H1 (cell line): ENCODE measurements at regions of chr15 and their contacts with region 1.

Region 1: GRCh38 chr15:75215107-75216004 is 13.7 kb downstream of the C15orf39 start:
- DNase-seq: peak in 1 of 2 experiments; percentile 58
- H3K4me3 ChIP-seq: no peak overlapping the region
- H3K27ac ChIP-seq: no peak overlapping the region
- H3K4me1 ChIP-seq: peaks cover 0 to 17% (median 3%) of the 10 kb centered on the region in 4 experiments; a peak in 4 of 7 replicates
- H3K27me3 ChIP-seq: peaks cover 0 to 3% (median 0%) of the 10 kb centered on the region in 4 experiments; a peak in 1 of 7 replicates
- CTCF ChIP-seq: no peak
- EP300 ChIP-seq: no peak
- POLR2A ChIP-seq: no peak
- RAD21 ChIP-seq: no peak

Region 2: DNA sequence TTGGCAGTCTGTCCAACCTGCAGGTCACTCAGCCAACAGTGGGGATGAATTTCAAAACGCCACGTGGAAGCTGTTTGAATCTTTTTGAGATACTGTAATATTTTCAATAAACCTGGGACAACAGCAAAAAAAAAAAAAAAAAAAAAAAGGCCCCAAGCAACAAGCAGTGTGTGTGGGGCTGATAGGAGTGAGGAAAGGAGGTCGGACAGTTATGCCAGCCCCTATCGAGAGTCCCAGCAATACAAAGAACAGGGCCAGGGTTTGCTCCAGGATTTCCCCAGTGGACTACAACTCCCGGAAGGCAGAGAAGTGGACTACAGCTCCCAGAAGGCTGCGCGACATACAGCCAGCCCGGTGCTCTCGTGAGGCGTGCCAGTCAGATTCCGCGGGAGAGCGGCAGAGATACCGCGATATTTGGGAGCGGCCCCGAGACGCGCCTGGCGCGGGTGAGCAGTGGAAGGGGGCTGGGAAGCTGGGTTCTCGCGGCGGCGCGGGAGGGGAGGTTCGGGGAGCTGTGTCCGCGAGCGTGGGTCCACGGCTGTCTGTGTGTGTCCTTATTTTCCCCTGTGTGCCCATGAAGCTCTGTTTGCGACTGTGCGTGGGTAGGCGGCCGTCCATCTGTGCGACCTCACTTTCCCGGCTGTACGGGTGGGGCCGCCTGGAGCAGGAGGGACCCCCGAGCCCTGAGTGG is 192.0 kb before region 1 on chr15 and contains the start of gene PPCDC:
- CTCF ChIA-PET with region 1: no interaction called
- POLR2A ChIA-PET with region 1: interaction called, 10 read pairs
- DNase-seq: peak; percentile 77 to 95
- H3K4me3 ChIP-seq: peak within 1 kb of the TSS; percentile 87 to 99 (median 90)
- H3K27ac ChIP-seq: peak within 1 kb of the TSS; percentile 90
- H3K4me1 ChIP-seq: no peaks in the 10 kb centered on the region; a peak in 1 of 7 replicates
- H3K27me3 ChIP-seq: no peaks in the 10 kb centered on the region
- CTCF ChIP-seq: no peak
- EP300 ChIP-seq: no peak
- POLR2A ChIP-seq: peak; percentile 95 to 99
- RAD21 ChIP-seq: peak in 1 of 2 experiments; percentile 7; a peak in 1 of 4 replicates
- total RNA-seq, gene PPCDC: 11.3 and 14.7 TPM in 2 replicates

Region 3: GRCh38 chr15:75307778-75308391 is 92.5 kb after region 1 on chr15:
- CTCF ChIA-PET with region 1: interaction called, 20 read pairs
- POLR2A ChIA-PET with region 1: interaction called, 3 read pairs
- DNase-seq: peak; percentile 60 to 88
- H3K4me3 ChIP-seq: no peak overlapping the region
- H3K27ac ChIP-seq: no peak overlapping the region
- H3K4me1 ChIP-seq: no peaks in the 10 kb centered on the region
- H3K27me3 ChIP-seq: no peaks in the 10 kb centered on the region
- CTCF ChIP-seq: peak; percentile 94 to 95 (median 95)
- EP300 ChIP-seq: no peak
- POLR2A ChIP-seq: no peak
- RAD21 ChIP-seq: peak; percentile 98 to 99